Left cardiac atrium (tissue), 4 donors: ENCODE measurements at regions of chr6 and their contacts with region 1.

Region 1: DNA sequence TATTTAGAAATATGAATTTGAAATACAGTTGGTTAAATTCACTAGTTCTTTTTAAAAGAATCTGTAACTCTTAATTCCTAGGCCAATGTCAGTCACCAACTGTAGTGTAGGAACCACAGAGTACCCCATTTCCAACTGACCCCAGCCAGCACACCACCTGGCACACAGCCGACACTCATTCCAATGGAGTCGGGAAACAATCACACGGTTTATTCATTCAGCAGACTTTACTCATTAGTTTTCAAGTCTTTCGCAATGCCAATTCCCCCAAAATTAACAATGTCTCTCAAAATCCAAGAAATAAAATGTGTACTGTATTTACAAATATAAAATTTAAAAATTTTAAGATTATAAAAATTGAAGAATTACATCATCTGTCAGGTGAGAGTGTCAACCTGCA is 13.5 kb downstream of the ARG1 start:
- DNase-seq: no peak
- ATAC-seq: no peak

Region 2: GRCh38 chr6:131627724-131628682 is 41.5 kb after region 1 on chr6 and contains the start of gene MED23:
- intact Hi-C with region 1: loop called in 1 of 2 experiments (anchors 5 kb)
- DNase-seq: peak; percentile 95
- ATAC-seq: peak; percentile 96 to 97
- total RNA-seq, gene MED23: 12.5 to 15.1 TPM

Region 3: DNA sequence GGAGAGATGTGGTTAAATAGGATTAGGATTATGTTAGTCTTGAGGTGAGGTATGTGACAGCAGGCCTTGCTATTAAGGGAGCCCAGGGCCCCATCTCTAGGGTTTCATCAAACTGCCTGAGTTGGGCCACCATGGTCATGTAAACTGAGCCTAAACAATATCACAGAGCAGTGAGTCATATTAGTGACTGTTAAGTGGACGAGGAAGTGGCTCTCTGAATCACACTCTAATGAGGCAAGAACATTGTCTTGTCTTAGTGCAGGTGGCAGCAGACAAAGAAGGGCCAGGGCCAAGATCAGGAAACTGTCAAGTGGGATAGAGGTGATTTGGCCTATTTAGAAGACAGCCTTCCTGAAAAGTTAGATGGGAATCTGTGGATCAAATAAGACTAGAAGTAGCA is 73.7 kb after region 1 on chr6:
- intact Hi-C with region 1: no loop called
- DNase-seq: no peak
- ATAC-seq: no peak